ENCODE measurements at regions of chr16 and their contacts with region 1.

Region 1: GRCh38 chr16:11955713-11956123 is 9.3 kb upstream of the TNFRSF17 start:
- DNase-seq: peak; percentile 98
- H3K4me3 ChIP-seq: 0 out of 2 replicates have a peak overlapping the region, but pooled peaks have one; percentile 16
- H3K27ac ChIP-seq: peak overlapping the region; percentile 88
- H3K4me1 ChIP-seq: peaks cover 25% of the 10 kb centered on the region
- H3K27me3 ChIP-seq: no peaks in the 10 kb centered on the region

Region 2: DNA sequence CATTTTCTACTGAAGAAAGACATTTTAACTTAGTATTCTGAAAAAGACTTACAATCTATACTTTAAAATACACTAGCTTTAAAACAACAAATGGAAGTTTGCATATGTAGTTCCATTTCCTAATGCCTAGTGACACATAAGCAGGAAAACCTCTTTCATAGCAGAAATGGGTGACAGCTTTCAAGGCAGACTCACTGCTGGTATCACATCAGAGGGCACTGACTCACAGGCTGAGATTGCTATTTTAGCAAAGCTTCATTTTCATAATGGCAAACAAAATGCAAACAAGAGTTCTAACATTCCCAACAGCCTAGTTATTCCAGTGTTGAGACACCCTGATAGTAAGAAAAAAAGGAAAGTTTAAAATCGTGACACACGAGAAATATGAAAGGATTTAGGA is 58.9 kb before region 1 on chr16:
- in situ Hi-C with region 1: no loop called
- DNase-seq: peak; percentile 93
- H3K4me3 ChIP-seq: peak overlapping the region; percentile 50
- H3K27ac ChIP-seq: peak overlapping the region; percentile 79
- H3K4me1 ChIP-seq: peaks cover 24% of the 10 kb centered on the region
- H3K27me3 ChIP-seq: no peaks in the 10 kb centered on the region

Region 3: GRCh38 chr16:12026741-12027490 is 71.2 kb after region 1 on chr16:
- in situ Hi-C with region 1: no loop called
- DNase-seq: no peak
- H3K4me3 ChIP-seq: no peak overlapping the region
- H3K27ac ChIP-seq: no peak overlapping the region
- H3K4me1 ChIP-seq: no peaks in the 10 kb centered on the region
- H3K27me3 ChIP-seq: no peaks in the 10 kb centered on the region

Region 4: GRCh38 chr16:12067714-12068401 is 112.1 kb after region 1 on chr16:
- in situ Hi-C with region 1: loop called (anchors 10 kb)
- DNase-seq: peak; percentile 85
- H3K4me3 ChIP-seq: no peak overlapping the region
- H3K27ac ChIP-seq: no peak overlapping the region
- H3K4me1 ChIP-seq: peaks cover 3% of the 10 kb centered on the region
- H3K27me3 ChIP-seq: no peaks in the 10 kb centered on the region

Region 5: DNA sequence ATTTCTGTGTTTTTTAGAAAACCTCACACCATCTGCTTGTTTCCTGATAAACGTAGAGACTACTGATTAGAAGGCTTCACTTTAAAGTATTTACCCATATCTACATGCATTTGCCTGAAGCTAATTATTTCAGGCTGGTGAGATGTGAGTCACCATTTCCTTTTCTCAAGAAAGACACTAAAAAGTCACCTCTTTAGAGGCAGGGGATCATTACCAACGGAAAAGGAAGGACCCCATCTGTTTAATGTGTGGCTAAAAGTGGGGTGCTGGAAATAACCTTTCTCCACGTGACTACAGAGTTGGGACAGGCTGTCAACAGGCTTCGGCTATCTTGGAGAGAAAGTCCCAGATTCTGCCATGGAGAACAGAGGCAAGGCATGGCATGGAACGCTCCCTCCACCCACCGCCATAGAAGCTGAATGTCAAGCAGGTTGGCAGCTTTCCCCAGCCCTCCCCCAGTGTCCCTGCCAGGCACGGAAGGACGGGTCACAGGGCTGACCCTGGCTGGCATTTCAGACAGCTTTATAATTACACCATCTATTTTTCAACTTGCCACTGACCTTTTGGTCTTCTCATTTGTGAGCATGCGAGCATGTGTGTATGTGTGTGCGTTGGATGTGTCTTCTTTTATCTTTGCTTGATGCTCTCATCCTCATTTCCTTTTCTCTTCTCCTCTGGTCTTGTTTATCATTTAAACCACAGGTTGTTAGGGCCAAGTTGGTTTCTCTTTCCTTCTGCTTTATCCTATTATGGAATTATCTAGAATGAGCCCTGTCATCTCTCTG is 691.0 kb after region 1 on chr16:
- in situ Hi-C with region 1: no loop called
- DNase-seq: peak; percentile 38
- H3K4me3 ChIP-seq: no peak overlapping the region
- H3K27ac ChIP-seq: no peak overlapping the region
- H3K4me1 ChIP-seq: peaks cover 7% of the 10 kb centered on the region; the same call in 1 of the 2 replicates
- H3K27me3 ChIP-seq: no peaks in the 10 kb centered on the region